Endothelial cell of umbilical vein (primary cell): ENCODE measurements at regions of chr7 and their contacts with region 1.

Region 1: DNA sequence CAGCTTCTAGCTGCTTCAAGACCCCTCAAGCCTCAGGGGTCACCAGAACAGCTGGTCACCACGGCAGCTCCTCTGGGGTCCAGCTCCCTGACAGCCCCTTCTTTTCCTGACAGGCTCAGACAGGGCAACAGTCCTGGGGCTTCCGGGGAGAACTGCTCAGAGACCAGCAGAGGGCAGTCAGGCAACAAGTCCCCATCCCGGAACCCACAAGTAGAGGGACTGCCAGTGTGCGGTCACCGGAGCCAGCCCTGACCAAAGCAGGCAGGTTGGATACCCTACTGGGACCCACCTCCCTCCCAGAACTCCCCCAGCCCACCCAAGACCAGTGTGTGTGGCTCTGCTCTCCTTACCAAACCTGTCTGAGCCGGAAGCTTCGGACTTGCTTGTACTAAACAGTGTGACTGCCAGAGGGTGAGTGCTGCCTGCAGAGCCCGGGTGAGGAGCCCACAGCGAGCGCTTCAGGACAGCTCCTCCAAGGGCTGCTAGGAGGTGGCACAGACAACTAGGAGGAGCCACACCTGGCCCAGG is 40.3 kb downstream of the YKT6 start:
- DNase-seq: peak; percentile 63
- H3K4me3 ChIP-seq: no peak overlapping the region
- H3K27ac ChIP-seq: no peak overlapping the region
- H3K4me1 ChIP-seq: no peaks in the 10 kb centered on the region
- H3K27me3 ChIP-seq: no peaks in the 10 kb centered on the region
- CTCF ChIP-seq: peak; percentile 71 to 76
- POLR2A ChIP-seq: no peak

Region 2: GRCh38 chr7:44277851-44278250 is 36.8 kb after region 1 on chr7:
- CTCF ChIA-PET with region 1: interaction called, 10 read pairs
- POLR2A ChIA-PET with region 1: no interaction called
- dilution Hi-C with region 1: no loop called
- intact Hi-C with region 1: no loop called
- DNase-seq: no peak
- H3K4me3 ChIP-seq: no peak overlapping the region
- H3K27ac ChIP-seq: no peak overlapping the region
- H3K4me1 ChIP-seq: no peaks in the 10 kb centered on the region
- H3K27me3 ChIP-seq: no peaks in the 10 kb centered on the region
- CTCF ChIP-seq: no peak
- POLR2A ChIP-seq: no peak

Region 3: GRCh38 chr7:44291066-44291732 is 50.2 kb after region 1 on chr7:
- CTCF ChIA-PET with region 1: interaction called, 11 read pairs
- POLR2A ChIA-PET with region 1: no interaction called
- dilution Hi-C with region 1: no loop called
- intact Hi-C with region 1: no loop called
- DNase-seq: peak; percentile 85
- H3K4me3 ChIP-seq: no peak overlapping the region
- H3K27ac ChIP-seq: peak overlapping the region; percentile 33
- H3K4me1 ChIP-seq: peaks cover 14% of the 10 kb centered on the region
- H3K27me3 ChIP-seq: peaks cover 0 to 2% of the 10 kb centered on the region in 2 experiments
- CTCF ChIP-seq: no peak
- POLR2A ChIP-seq: no peak

Region 4: DNA sequence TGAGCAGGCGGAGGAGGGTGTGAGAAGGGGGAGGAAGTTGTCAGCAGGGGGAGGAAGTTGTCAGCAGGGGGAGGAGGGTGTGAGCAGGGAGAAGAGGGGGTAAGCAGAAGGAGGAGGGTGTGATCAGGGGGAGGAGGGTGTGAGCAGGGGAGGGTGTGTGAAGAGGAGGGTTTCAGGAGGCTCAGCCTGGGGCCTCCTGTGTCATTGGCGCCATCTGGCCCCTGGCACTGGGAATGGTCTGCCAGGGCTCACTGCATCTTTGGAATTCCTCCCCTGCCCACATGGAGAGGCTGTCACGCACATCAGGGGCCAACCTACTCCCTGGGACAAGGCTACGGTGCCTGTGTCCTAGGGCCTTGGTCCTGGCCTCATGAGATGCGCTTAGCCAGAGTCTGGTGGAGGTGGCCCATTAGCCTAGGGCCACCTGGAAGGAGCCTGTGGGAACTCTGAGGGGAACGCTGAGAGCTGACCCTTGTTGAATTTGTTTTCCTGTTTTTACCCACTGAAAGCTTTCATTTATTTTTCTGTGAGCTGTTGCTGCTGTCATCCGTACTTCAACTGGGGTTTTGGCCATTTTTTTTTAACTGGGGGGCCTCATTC is 66.4 kb after region 1 on chr7:
- CTCF ChIA-PET with region 1: interaction called, 36 read pairs
- POLR2A ChIA-PET with region 1: no interaction called
- dilution Hi-C with region 1: no loop called
- intact Hi-C with region 1: loop called (anchors 1 kb)
- DNase-seq: peak; percentile 44
- H3K4me3 ChIP-seq: no peak overlapping the region
- H3K27ac ChIP-seq: no peak overlapping the region
- H3K4me1 ChIP-seq: peaks cover 9% of the 10 kb centered on the region
- H3K27me3 ChIP-seq: no peaks in the 10 kb centered on the region
- CTCF ChIP-seq: peak; percentile 37 to 63
- POLR2A ChIP-seq: no peak

Region 5: DNA sequence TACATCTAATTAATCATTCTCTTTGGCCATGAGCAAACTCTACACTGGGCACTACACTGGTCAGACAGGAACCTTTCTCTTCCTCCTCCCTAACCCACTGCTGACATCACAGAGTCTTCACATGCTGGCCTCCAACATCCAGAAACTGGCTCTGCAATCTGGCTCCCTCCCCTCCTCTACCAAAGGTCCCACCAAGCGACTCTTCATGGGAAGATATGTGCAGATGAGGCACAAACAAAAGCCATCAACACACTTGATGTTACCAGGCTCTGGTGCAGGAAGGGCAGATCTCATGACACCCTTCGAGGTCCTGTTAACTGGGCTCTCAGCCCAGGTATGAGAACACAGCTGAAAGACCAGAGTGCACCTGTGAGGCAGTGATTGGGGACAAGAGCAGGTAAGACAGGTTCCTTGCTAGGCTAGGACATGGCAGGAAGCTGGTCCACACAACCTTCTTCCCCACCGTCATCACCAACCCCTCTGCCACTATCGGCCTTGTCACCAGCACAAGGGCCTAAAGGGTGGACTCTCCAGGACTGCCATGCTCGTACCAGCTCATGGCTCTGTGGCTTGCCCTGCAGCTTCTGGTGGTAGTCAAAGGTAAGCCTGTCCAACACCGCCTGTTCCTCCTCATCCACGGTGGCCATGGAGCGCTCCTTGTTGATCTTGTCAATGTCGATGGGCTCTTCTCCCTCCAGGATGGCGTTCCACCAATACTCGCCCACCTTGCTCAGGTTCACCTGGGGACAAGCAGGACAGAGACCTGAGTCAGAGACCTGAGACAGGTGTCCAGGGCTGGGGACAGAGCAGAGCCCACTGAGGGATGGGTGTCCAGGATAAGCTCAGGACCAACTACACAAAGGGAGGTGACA is 150.9 kb after region 1 on chr7:
- CTCF ChIA-PET with region 1: no interaction called
- POLR2A ChIA-PET with region 1: no interaction called
- dilution Hi-C with region 1: no loop called
- intact Hi-C with region 1: no loop called
- DNase-seq: no peak
- H3K4me3 ChIP-seq: no peak overlapping the region
- H3K27ac ChIP-seq: no peak overlapping the region
- H3K4me1 ChIP-seq: peaks cover 14% of the 10 kb centered on the region
- H3K27me3 ChIP-seq: no peaks in the 10 kb centered on the region
- CTCF ChIP-seq: no peak
- POLR2A ChIP-seq: no peak

Region 6: DNA sequence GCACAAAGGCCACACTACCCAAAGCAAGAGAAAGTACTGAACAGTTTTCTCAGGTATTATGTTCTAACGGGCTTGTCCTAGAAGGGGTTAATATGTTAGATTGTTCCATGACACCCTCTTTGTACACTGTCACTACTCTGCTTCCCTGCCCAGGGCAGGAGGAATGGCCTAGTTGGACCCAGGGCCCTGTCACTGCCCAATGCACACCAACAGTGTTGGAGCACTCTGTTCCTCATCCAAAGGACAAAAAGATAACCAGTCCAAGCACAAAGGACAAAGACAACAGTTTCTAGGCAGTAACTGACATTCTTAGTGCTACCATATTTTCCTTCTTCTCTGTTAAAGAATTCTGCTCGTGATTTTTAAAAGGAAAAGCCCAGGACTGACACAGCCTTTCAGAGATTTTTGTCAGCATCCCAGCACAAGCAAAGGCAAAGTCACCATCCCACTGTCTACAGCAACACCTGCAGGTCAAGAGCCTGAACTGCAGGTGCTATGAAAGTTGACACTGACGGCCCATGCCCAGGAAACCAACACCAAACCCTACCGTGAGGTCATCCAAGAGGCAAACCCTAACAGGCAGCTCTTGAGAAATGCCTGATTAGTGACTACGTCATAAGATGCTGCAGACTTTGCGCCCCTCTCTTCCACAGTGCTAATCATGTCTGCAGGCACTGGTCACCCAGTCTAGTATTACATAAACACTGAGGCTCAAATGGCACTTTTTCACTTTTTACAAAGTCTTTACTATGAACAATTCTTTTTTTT is 236.2 kb after region 1 on chr7:
- CTCF ChIA-PET with region 1: interaction called, 9 read pairs
- POLR2A ChIA-PET with region 1: no interaction called
- dilution Hi-C with region 1: no loop called
- intact Hi-C with region 1: loop called (anchors 1 kb)
- DNase-seq: peak; percentile 73
- H3K4me3 ChIP-seq: no peak overlapping the region
- H3K27ac ChIP-seq: peak overlapping the region; percentile 31
- H3K4me1 ChIP-seq: peaks cover 29% of the 10 kb centered on the region
- H3K27me3 ChIP-seq: no peaks in the 10 kb centered on the region
- CTCF ChIP-seq: peak; percentile 95 to 99
- POLR2A ChIP-seq: no peak

Region 7: GRCh38 chr7:44534501-44534900 is 293.5 kb after region 1 on chr7:
- CTCF ChIA-PET with region 1: interaction called, 11 read pairs
- POLR2A ChIA-PET with region 1: no interaction called
- dilution Hi-C with region 1: no loop called
- intact Hi-C with region 1: no loop called
- DNase-seq: peak; percentile 21
- H3K4me3 ChIP-seq: no peak overlapping the region
- H3K27ac ChIP-seq: no peak overlapping the region
- H3K4me1 ChIP-seq: no peaks in the 10 kb centered on the region
- H3K27me3 ChIP-seq: no peaks in the 10 kb centered on the region
- CTCF ChIP-seq: peak; percentile 75 to 81
- POLR2A ChIP-seq: no peak

Region 8: DNA sequence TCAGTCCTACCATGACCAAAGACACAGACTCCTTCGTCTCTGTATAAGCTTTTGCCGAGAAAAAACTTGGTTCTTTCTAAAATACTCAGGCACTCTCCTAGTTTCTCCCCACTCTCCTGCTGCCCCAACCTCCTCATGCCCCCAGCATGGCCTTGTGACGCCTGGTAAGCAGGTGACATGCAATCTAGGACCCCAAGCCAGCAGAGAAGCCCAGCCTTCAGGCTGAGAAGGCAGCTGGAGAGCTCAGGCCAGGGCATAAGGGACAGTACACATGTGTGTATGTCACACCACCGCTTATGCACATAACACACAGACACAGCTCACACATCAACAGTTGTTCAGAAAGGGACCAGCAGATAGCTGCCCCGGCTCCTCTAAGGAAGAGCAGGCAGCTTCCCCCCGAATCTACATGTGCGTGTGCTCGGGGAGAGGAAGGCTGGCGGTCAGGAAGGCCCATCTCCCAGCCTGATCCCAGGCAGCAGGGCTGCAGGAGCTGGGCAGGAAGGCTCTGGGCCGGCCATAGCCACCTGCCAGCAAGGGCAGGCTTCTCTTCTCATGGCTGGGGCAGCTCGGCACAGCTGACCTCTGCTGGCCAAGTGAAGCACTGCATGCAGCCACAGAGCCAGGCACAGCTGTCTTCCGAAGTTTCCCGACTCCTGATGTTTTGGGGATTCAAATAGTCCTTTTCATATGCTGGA is 324.2 kb after region 1 on chr7:
- CTCF ChIA-PET with region 1: interaction called, 46 read pairs
- POLR2A ChIA-PET with region 1: no interaction called
- dilution Hi-C with region 1: no loop called
- intact Hi-C with region 1: loop called (anchors 1 kb)
- DNase-seq: peak; percentile 62
- H3K4me3 ChIP-seq: no peak overlapping the region
- H3K27ac ChIP-seq: no peak overlapping the region
- H3K4me1 ChIP-seq: no peaks in the 10 kb centered on the region
- H3K27me3 ChIP-seq: no peaks in the 10 kb centered on the region
- CTCF ChIP-seq: peak; percentile 94 to 98
- POLR2A ChIP-seq: no peak